ENCODE measurements at regions of chr2 and their contacts with region 1.

Region 1: DNA sequence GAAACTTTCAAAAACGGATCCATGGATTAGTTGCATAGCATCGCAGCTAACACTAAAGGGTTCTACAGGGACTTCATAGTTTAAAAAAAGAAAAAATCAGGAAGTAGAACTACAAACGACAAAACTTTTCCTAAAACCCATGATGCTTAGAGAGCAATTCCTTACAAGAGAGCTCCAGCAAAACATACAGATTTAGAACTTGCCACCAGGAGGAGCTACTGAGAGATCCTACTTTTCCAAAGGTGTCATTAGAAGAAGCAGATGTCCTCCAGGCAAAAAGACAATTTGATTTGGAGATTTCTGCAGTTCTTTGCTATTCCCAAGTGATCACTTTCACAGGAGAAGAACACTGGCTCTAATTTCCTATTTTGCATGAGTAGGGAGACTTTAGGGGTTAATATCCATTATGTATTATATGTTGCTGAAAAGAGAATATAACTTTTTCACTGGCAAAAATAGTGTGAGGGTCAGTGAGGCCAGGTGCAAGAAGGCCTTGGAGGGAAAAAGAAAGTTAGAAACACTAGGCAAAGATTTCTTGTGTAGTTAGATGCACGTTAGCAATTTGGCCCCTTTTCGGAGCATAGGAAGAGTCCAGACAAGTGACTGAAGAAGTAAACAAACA is 436.2 kb downstream of the SUCLG1 start:
- DNase-seq: no peak
- H3K4me3 ChIP-seq: no peak overlapping the region
- H3K27ac ChIP-seq: no peak overlapping the region
- H3K4me1 ChIP-seq: no peaks in the 10 kb centered on the region
- H3K27me3 ChIP-seq: peaks cover 9% of the 10 kb centered on the region
- CTCF ChIP-seq: peak; percentile 70

Region 2: DNA sequence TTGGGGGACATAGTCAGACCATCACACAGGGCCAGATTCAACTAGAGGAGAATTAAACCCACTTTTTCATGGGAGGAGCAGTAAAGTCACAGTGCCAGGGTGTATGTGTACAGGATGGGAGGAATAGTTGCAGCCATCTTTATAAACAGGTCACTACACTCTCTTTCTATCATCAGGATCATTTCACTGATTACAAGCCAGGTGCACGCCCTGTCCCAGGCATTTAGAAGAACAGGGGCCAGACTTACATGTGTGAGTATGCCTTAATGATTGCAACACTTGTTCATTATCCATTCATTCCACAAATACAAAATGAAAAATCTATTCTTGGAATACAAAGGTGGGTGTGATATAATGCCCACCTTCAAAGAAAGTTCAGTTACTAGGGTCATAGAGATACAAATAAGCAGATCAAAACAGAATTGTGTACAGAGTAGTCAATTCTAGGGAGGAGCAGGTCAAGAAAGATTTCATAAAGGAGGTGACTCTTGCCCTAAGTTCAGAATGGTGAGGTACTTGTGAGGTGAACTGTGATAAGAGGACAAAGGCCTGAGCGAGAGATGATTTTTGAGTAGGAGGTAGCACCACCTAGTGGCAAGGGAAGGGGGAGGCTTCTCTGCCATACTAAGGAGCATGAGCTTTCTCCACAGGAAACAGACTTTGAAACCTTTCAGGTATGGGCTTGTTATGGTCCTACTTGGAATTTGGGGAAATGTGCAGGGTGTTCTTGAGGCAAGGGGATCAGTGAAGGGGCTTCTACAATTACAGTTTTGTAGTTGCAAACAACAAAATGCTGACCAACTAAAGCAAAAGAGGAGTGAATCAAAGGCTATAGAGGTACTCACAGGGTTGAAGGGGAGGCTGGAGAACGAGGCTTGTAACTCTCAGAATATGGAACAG is 279.8 kb after region 1 on chr2:
- intact Hi-C with region 1: loop called (anchors 10 kb)
- DNase-seq: no peak
- H3K4me3 ChIP-seq: no peak overlapping the region
- H3K27ac ChIP-seq: no peak overlapping the region
- H3K4me1 ChIP-seq: no peaks in the 10 kb centered on the region
- H3K27me3 ChIP-seq: peaks cover 2% of the 10 kb centered on the region
- CTCF ChIP-seq: peak; percentile 74

Region 3: GRCh38 chr2:84908948-84909721 is 886.2 kb after region 1 on chr2:
- intact Hi-C with region 1: no loop called
- DNase-seq: no peak
- H3K4me3 ChIP-seq: no peak overlapping the region
- H3K27ac ChIP-seq: peak overlapping the region; percentile 97
- H3K4me1 ChIP-seq: peaks cover 27% of the 10 kb centered on the region
- H3K27me3 ChIP-seq: no peaks in the 10 kb centered on the region
- CTCF ChIP-seq: no peak